HCT116 (cell line): ENCODE measurements at regions of chr2 and their contacts with region 1.

Region 1: DNA sequence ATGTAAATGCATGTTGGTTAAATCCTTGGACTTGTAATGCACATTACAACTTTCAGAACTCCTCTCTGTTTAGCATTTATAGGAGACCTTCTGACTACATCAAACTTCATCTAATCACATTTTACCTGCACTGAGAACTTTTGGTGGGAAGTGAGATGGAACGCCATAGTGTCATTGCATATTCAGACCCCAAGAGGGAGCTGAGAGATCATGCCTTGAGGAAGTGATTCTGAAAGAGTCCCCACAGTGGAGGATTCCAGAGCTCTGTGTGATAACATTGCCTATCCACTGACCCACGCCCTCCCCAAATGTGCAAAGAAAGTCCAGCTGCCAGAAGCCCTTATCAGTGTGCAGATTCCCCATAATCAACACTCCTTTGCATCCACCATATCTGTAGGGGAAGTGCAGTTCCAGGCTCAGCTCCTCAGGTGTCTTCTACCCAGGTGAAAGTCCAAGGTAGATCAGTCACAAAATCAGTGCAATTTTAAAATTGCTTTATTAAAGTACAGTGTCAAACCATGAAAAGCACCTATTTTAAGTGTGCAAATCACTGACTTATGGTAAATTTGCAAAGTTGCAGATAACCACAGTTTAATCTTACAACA is 212.4 kb downstream of the RPIA start:
- DNase-seq: peak; percentile 31
- ATAC-seq: peak; percentile 88
- H3K4me3 ChIP-seq: no peak overlapping the region
- H3K27ac ChIP-seq: no peak overlapping the region
- H3K4me1 ChIP-seq: no peaks in the 10 kb centered on the region
- H3K27me3 ChIP-seq: peaks cover 21% of the 10 kb centered on the region
- CTCF ChIP-seq: peak; percentile 63 to 82 (median 81)
- POLR2A ChIP-seq: no peak
- RAD21 ChIP-seq: peak; percentile 75

Region 2: GRCh38 chr2:88055371-88056128 is 848.3 kb before region 1 on chr2 and contains the start of gene KRCC1:
- CTCF ChIA-PET with region 1: no interaction called
- POLR2A ChIA-PET with region 1: no interaction called
- RAD21 ChIA-PET with region 1: no interaction called
- intact Hi-C with region 1: no loop called
- DNase-seq: peak; percentile 92
- ATAC-seq: peak; percentile 93
- H3K4me3 ChIP-seq: peak within 1 kb of the TSS; percentile 82 to 91
- H3K27ac ChIP-seq: peak within 1 kb of the TSS; percentile 92
- H3K4me1 ChIP-seq: peaks cover 7 to 21% of the 10 kb centered on the region in 2 experiments; a peak in 3 of 4 replicates
- H3K27me3 ChIP-seq: no peaks in the 10 kb centered on the region
- CTCF ChIP-seq: no peak
- POLR2A ChIP-seq: peak; percentile 88
- RAD21 ChIP-seq: no peak
- total RNA-seq, gene KRCC1: 5.8 TPM

Region 3: DNA sequence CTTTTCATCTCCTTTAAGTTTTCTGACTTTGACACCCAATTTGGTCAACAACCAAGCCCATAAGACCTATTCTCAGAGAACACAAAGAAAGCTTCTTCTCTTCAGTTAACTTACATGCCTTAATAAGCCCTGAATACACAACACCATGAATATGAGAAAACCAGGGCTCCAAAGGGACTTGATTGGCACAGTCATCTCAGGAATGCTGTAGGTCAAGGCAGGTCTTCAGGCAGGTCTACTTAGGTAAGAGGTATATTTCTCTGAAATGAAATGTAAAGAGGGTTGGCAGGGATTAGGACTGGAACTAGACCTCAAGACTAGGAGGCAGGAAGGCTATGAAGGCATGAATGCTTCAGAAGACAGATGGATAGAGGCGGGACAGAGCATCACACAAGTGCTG is 252.2 kb before region 1 on chr2:
- CTCF ChIA-PET with region 1: no interaction called
- POLR2A ChIA-PET with region 1: no interaction called
- RAD21 ChIA-PET with region 1: no interaction called
- intact Hi-C with region 1: no loop called
- DNase-seq: no peak
- ATAC-seq: no peak
- H3K4me3 ChIP-seq: no peak overlapping the region
- H3K27ac ChIP-seq: no peak overlapping the region
- H3K4me1 ChIP-seq: no peaks in the 10 kb centered on the region
- H3K27me3 ChIP-seq: no peaks in the 10 kb centered on the region
- CTCF ChIP-seq: no peak
- POLR2A ChIP-seq: no peak
- RAD21 ChIP-seq: no peak

Region 4: DNA sequence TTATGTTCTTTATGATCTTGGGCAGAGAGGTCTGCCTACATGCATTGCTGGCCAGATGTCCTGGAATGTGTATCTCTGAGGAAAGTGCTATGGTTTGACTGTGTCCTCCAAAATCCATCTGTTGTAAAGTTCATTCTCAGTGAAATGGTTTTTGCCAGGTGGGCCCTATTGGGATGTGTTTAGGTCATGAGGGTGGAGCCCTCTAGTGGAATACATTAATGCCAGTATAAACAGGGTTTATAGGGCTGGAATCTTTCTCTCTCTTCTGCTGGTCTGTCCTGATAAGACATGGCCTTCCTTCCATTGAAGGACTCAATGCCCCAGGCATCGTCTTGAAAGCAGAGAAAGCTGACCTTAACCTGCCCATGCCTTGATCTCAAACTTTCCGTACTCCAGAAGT is 46.2 kb after region 1 on chr2:
- CTCF ChIA-PET with region 1: interaction called, 3 read pairs
- POLR2A ChIA-PET with region 1: no interaction called
- RAD21 ChIA-PET with region 1: no interaction called
- intact Hi-C with region 1: loop called (anchors 1 kb)
- DNase-seq: no peak
- ATAC-seq: peak; percentile 77
- H3K4me3 ChIP-seq: no peak overlapping the region
- H3K27ac ChIP-seq: no peak overlapping the region
- H3K4me1 ChIP-seq: no peaks in the 10 kb centered on the region
- H3K27me3 ChIP-seq: peaks cover 38% of the 10 kb centered on the region
- CTCF ChIP-seq: peak; percentile 34 to 64 (median 61); a peak in 5 of 6 replicates
- POLR2A ChIP-seq: no peak
- RAD21 ChIP-seq: peak; percentile 18; the same call in 1 of the 2 replicates